Common myeloid progenitor, CD34-positive (primary cell): ENCODE measurements at regions of chr6 and their contacts with region 1.

Region 1: GRCh38 chr6:159017757-159018559 is 18.0 kb upstream of the RSPH3 start:
- DNase-seq: peak in 1 of 3 donors; percentile 17
- H3K4me3 ChIP-seq: peak overlapping the region in 2 of 7 experiments; percentile 10 to 15
- H3K27ac ChIP-seq: peak overlapping the region; percentile 15 to 35
- H3K4me1 ChIP-seq: peaks cover 14 to 27% (median 20%) of the 10 kb centered on the region in 4 experiments
- H3K27me3 ChIP-seq: no peaks in the 10 kb centered on the region

Region 2: GRCh38 chr6:158955255-158955654 is 62.7 kb before region 1 on chr6:
- CTCF ChIA-PET with region 1: no interaction called
- POLR2A ChIA-PET with region 1: no interaction called
- DNase-seq: no peak
- H3K4me3 ChIP-seq: no peak overlapping the region
- H3K27ac ChIP-seq: no peak overlapping the region
- H3K4me1 ChIP-seq: no peaks in the 10 kb centered on the region
- H3K27me3 ChIP-seq: no peaks in the 10 kb centered on the region

Region 3: GRCh38 chr6:159033160-159034049 is 15.4 kb after region 1 on chr6:
- CTCF ChIA-PET with region 1: interaction called, 11 read pairs
- POLR2A ChIA-PET with region 1: no interaction called
- DNase-seq: no peak
- H3K4me3 ChIP-seq: no peak overlapping the region
- H3K27ac ChIP-seq: no peak overlapping the region
- H3K4me1 ChIP-seq: peaks cover 4 to 14% (median 10%) of the 10 kb centered on the region in 4 experiments
- H3K27me3 ChIP-seq: no peaks in the 10 kb centered on the region